Activated naive CD4-positive, alpha-beta T cell treated with anti-CD3 and anti-CD28 coated beads for 36 hours (primary cell): ENCODE measurements at regions of chr1 and their contacts with region 1.

Region 1: GRCh38 chr1:241499910-241500309 is 19.6 kb downstream of the FH start:
- DNase-seq: no peak
- H3K4me3 Mint-ChIP-seq: no peak overlapping the region
- H3K27ac Mint-ChIP-seq: no peak overlapping the region
- H3K4me1 Mint-ChIP-seq: peaks cover 3% of the 10 kb centered on the region
- H3K27me3 Mint-ChIP-seq: no peaks in the 10 kb centered on the region

Region 2: GRCh38 chr1:240602189-240602588 is 897.7 kb before region 1 on chr1:
- CTCF ChIA-PET with region 1: no interaction called
- intact Hi-C with region 1: no loop called
- DNase-seq: no peak
- H3K4me3 Mint-ChIP-seq: no peak overlapping the region
- H3K27ac Mint-ChIP-seq: no peak overlapping the region
- H3K4me1 Mint-ChIP-seq: no peaks in the 10 kb centered on the region
- H3K27me3 Mint-ChIP-seq: no peaks in the 10 kb centered on the region

Region 3: DNA sequence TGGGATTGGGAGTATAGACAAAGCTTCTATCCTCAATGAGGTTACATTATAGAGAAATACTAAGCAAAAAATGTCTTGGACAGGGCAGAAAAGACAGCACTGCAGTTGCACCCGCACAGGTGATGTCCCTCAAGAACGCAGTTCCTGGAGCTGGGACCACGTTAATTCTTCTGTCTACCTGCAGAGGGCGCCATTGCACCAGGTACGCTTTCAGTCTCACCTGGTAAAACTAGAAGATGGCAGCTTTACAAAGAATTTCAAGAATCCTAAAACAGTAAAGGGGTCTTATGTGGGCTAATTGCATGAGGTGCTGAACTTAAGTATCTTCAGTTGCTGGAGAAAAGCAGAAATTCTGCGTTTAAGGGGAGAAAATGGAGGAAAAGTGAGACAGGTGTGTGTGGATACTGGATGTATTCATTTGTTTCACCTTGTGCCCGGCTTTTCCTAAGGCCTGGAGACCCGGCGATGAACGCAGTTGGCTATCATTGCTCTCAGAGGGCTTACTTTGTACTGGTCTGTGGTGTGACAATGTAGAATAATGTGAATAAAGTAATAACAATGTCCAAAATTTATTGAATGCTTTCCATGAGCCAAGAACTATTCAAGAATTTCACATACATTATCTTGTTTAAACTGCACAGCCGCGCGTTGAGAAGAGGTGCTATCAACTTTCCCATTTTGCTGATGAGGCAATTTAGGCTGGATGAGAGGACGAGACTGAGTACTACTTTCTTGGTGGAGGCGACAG is 611.7 kb before region 1 on chr1:
- CTCF ChIA-PET with region 1: interaction called, 4 read pairs
- intact Hi-C with region 1: loop called (anchors 2 kb)
- DNase-seq: peak; percentile 52
- H3K4me3 Mint-ChIP-seq: no peak overlapping the region
- H3K27ac Mint-ChIP-seq: no peak overlapping the region
- H3K4me1 Mint-ChIP-seq: no peaks in the 10 kb centered on the region
- H3K27me3 Mint-ChIP-seq: no peaks in the 10 kb centered on the region